ENCODE measurements at regions of chr15 and their contacts with region 1.

Region 1: GRCh38 chr15:85742186-85742821 is 52.4 kb downstream of the KLHL25 start:
- DNase-seq: no peak
- CTCF ChIP-seq: no peak

Region 2: GRCh38 chr15:85618956-85619491 is 123.3 kb before region 1 on chr15:
- CTCF ChIA-PET with region 1: no interaction called
- POLR2A ChIA-PET with region 1: no interaction called
- DNase-seq: peak; percentile 32
- CTCF ChIP-seq: no peak

Region 3: DNA sequence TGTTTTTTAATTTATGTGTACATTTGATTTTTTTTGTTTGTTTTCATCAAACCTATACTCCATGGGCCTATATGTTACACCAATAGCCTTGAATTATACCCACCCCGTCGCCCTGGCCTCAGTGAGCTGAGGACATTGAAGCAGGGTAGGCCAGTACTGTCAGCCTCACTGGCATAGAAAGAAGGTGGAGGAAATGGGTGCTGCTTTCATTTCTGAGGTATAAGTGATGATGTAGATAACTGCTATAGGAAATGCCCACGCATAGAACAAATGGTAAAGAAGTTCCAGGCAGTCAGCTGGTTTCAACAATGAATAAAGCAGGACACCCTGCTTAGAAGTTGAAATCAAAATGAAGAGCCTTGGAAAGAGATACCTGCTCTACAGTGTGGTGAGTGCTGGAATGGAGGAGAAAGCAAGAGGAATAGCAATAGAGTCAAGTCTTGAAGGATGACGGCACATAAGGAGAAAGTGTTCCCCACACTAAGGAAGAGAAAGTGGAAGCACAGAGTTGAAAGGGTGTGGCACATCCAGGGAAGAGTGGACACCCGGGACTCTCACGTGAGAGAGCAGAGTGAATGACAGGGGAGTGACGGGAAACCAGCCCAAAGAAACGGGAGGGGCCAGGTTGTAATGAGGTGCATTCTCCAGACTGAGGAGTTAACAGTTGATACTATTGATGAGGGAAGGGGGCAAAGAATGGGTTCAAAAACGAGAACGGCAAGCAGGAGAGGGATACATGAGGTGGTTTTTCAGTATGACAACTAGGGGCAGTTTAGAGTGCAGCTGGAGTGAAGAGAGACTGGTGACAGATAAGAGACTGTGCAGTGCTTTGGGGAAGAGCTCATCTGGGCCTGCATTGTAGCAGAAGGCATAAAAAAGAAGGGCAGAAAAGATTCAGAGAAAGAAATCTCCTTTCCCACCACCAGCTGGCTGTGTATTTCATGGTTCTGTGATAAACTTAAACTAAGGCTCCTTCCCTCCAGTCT is 18.1 kb before region 1 on chr15:
- CTCF ChIA-PET with region 1: interaction called, 30 read pairs
- POLR2A ChIA-PET with region 1: no interaction called
- DNase-seq: no peak
- CTCF ChIP-seq: no peak

Measured in GM10248 (cell line).